Activated CD8-positive, alpha-beta T cell treated with anti-CD3 and anti-CD28 coated beads for 36 hours (primary cell): ENCODE measurements at regions of chr6 and their contacts with region 1.

Region 1: GRCh38 chr6:139219271-139219729 is 72.5 kb downstream of the TXLNB start:
- DNase-seq: peak; percentile 85
- ATAC-seq: peak; percentile 100
- H3K4me3 Mint-ChIP-seq: peak overlapping the region; percentile 22
- H3K27ac Mint-ChIP-seq: peak overlapping the region; percentile 72
- H3K4me1 Mint-ChIP-seq: peaks cover 11% of the 10 kb centered on the region
- H3K27me3 Mint-ChIP-seq: no peaks in the 10 kb centered on the region
- CTCF ChIP-seq: peak; percentile 87

Region 2: DNA sequence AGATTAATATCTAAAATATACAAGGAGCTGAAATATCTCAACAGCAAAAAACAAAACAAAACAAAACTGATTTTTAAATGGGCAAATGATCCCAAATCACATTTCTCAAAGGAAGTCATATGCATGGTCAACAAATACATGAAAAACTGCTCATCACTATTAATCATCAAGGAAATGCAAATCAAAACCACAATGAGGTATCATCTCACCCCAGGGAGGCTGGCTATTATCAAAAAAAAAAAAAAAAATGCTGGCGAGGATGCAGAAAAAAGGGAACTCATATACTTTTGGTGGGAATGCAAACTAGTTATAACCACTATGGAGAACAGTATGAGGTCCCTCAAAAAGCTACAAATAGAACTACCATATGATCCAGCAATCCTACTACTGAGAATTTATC is 265.8 kb before region 1 on chr6:
- CTCF ChIA-PET with region 1: no interaction called
- POLR2A ChIA-PET with region 1: no interaction called
- intact Hi-C with region 1: no loop called
- DNase-seq: no peak
- ATAC-seq: peak; percentile 58
- H3K4me3 Mint-ChIP-seq: no peak overlapping the region
- H3K27ac Mint-ChIP-seq: peak overlapping the region; percentile 28
- H3K4me1 Mint-ChIP-seq: peaks cover 58% of the 10 kb centered on the region
- H3K27me3 Mint-ChIP-seq: no peaks in the 10 kb centered on the region
- CTCF ChIP-seq: no peak

Region 3: DNA sequence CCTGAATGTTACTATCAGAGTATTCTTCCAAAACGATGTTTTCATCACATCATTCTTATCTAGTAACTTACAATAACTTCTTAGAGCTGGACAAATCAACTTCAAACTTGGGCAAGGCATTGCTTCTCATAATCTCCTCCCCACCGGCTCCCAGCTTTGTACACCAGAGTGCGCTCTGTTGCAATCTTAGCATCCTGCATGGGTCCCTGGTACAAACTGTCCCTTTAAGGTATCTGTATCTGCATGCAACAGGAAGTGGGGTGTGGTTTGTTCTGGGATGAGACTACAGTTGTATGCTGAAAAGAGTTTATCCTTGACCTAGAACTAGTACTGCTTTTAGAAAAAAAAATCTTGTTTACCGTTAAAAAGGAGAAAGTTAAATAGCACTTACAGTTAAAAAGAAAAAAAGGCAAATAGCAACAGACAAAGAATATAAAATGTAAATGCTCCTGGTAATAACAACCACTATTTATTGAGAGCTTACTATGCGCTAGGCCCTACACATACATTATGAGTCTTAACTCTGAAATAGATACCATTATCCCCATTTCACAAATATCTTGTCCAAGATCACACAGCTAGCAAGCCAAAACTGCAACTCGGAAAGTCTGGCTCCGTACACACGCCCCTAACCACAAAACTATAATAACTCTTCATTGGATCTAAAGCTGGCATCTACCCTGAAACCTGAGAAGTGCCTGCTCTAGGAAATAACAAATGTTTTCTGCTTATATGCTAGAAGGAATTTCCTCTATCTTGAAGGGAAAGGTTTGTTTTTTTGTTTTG is 94.2 kb before region 1 on chr6:
- CTCF ChIA-PET with region 1: interaction called, 29 read pairs
- POLR2A ChIA-PET with region 1: no interaction called
- intact Hi-C with region 1: no loop called
- DNase-seq: peak; percentile 91
- ATAC-seq: peak; percentile 96
- H3K4me3 Mint-ChIP-seq: peak overlapping the region; percentile 53
- H3K27ac Mint-ChIP-seq: peak overlapping the region; percentile 96
- H3K4me1 Mint-ChIP-seq: peaks cover 49% of the 10 kb centered on the region
- H3K27me3 Mint-ChIP-seq: no peaks in the 10 kb centered on the region
- CTCF ChIP-seq: peak; percentile 66

Region 4: DNA sequence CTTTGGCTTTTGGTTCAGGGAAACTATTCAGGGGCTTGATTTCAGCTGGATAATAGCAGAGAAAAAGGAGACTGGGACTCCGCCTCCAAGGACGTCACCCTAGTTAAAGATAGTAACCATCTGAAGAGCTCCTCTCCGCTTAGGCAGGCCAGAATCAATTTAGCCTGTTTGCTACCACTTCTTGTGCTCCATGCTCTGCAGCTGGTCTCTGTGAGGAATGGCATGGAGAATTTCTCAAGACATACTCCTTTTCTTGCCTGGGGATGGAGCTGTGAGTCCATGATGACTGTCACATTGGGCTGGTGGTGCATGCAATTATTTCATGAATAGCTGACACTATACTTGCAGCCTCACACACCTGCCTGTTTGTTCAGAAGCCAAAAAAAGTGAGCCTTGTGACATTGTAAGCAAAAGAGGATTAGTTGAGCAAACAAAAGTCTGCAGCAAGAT is 11.1 kb after region 1 on chr6:
- CTCF ChIA-PET with region 1: interaction called, 13 read pairs
- POLR2A ChIA-PET with region 1: interaction called, 3 read pairs
- intact Hi-C with region 1: no loop called
- DNase-seq: no peak
- ATAC-seq: no peak
- H3K4me3 Mint-ChIP-seq: no peak overlapping the region
- H3K27ac Mint-ChIP-seq: no peak overlapping the region
- H3K4me1 Mint-ChIP-seq: peaks cover 2% of the 10 kb centered on the region
- H3K27me3 Mint-ChIP-seq: no peaks in the 10 kb centered on the region
- CTCF ChIP-seq: no peak

Region 5: GRCh38 chr6:139262519-139263300 is 43.4 kb after region 1 on chr6:
- CTCF ChIA-PET with region 1: interaction called, 16 read pairs
- POLR2A ChIA-PET with region 1: no interaction called
- intact Hi-C with region 1: no loop called
- DNase-seq: peak; percentile 37
- ATAC-seq: peak; percentile 97
- H3K4me3 Mint-ChIP-seq: peak overlapping the region; percentile 66
- H3K27ac Mint-ChIP-seq: peak overlapping the region; percentile 87
- H3K4me1 Mint-ChIP-seq: peaks cover 19% of the 10 kb centered on the region
- H3K27me3 Mint-ChIP-seq: no peaks in the 10 kb centered on the region
- CTCF ChIP-seq: no peak

Region 6: GRCh38 chr6:139355172-139355571 is 135.9 kb after region 1 on chr6:
- CTCF ChIA-PET with region 1: interaction called, 50 read pairs
- POLR2A ChIA-PET with region 1: no interaction called
- intact Hi-C with region 1: no loop called
- DNase-seq: no peak
- ATAC-seq: peak; percentile 53
- H3K4me3 Mint-ChIP-seq: no peak overlapping the region
- H3K27ac Mint-ChIP-seq: no peak overlapping the region
- H3K4me1 Mint-ChIP-seq: peaks cover 4% of the 10 kb centered on the region
- H3K27me3 Mint-ChIP-seq: no peaks in the 10 kb centered on the region
- CTCF ChIP-seq: no peak

Region 7: GRCh38 chr6:139375232-139376016 is 156.1 kb after region 1 on chr6:
- CTCF ChIA-PET with region 1: interaction called, 87 read pairs
- POLR2A ChIA-PET with region 1: interaction called, 3 read pairs
- intact Hi-C with region 1: no loop called
- DNase-seq: peak; percentile 87
- ATAC-seq: peak; percentile 58
- H3K4me3 Mint-ChIP-seq: peak overlapping the region; percentile 86
- H3K27ac Mint-ChIP-seq: peak overlapping the region; percentile 98
- H3K4me1 Mint-ChIP-seq: peaks cover 34% of the 10 kb centered on the region
- H3K27me3 Mint-ChIP-seq: no peaks in the 10 kb centered on the region
- CTCF ChIP-seq: no peak

Region 8: DNA sequence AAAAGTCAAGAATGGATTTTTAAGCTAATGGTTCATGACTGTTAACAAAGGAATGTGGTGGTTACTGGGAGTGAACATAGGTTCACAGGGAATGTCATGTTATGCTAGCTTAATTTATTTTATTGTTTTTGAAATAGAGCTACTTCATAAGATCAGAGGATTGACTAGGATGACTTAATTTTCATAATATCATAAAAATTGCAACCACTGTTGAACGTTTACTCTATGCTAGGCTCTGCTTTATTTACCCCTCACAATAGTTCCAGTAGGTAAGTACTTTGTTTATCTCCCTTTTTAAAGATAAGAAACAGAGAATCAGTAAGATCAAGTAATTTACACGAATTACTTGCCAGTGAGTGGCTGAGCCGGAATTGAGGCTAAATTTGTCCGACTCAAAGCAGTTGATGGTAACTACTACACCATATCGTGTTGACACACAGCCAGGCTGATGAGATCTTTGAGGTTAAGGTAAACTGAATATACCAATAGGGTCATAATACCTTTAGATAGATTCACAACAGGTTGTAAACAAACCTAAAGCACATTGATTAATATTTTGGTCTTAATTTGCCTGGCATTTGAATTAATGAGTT is 349.8 kb after region 1 on chr6:
- CTCF ChIA-PET with region 1: no interaction called
- POLR2A ChIA-PET with region 1: no interaction called
- intact Hi-C with region 1: no loop called
- DNase-seq: no peak
- ATAC-seq: no peak
- H3K4me3 Mint-ChIP-seq: no peak overlapping the region
- H3K27ac Mint-ChIP-seq: no peak overlapping the region
- H3K4me1 Mint-ChIP-seq: peaks cover 4% of the 10 kb centered on the region
- H3K27me3 Mint-ChIP-seq: no peaks in the 10 kb centered on the region
- CTCF ChIP-seq: no peak